HEK293 (cell line): ENCODE measurements at regions of chr9 and their contacts with region 1.

Region 1: GRCh38 chr9:35790385-35791296 is 750 bp upstream of the NPR2 start:
- H3K4me3 ChIP-seq: no peak overlapping the region
- H3K27ac ChIP-seq: no peak overlapping the region
- H3K4me1 ChIP-seq: no peaks in the 10 kb centered on the region
- CTCF ChIP-seq: peak; percentile 82

Region 2: DNA sequence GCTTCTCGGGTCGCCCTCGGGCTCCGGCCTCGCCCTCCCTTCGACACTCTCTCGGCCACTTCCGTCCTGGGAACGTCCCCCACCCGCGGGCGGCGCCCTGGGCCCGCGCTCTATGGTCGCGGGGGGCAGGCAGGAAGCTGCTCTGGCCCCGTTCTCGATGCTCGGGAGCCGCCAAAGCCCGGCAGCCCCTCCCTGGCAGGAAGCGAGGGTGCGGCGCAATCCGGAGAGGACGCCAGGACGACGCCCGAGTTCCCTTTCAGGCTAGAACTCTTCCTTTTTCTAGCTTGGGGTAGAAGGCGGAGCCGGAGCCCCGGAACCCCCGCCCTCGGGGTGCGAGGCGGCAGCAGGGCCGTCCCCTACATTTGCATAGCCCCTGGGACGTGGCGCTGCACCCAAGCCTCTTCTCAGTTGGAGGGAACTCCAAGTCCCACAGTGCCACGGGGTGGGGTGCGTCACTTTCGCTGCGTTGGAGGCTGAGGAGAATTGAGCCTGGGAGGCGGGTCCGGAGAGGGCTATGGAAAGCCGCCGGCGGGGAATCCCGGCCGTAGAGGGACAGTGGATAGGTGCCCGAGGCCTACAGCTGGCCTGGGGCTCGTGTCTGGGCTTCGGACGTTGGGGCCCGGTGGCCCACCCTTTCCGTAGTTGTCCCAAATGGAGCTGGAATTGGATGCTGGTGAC is 58.4 kb before region 1 on chr9 and contains the starts of genes CREB3 and TLN1:
- CTCF ChIA-PET with region 1: interaction called, 22 read pairs
- POLR2A ChIA-PET with region 1: interaction called, 7 read pairs
- H3K4me3 ChIP-seq: peak within 1 kb of the TSS; percentile 81
- H3K27ac ChIP-seq: peak within 1 kb of the TSS; percentile 81
- H3K4me1 ChIP-seq: peaks cover 13% of the 10 kb centered on the region
- CTCF ChIP-seq: peak; percentile 81

Region 3: DNA sequence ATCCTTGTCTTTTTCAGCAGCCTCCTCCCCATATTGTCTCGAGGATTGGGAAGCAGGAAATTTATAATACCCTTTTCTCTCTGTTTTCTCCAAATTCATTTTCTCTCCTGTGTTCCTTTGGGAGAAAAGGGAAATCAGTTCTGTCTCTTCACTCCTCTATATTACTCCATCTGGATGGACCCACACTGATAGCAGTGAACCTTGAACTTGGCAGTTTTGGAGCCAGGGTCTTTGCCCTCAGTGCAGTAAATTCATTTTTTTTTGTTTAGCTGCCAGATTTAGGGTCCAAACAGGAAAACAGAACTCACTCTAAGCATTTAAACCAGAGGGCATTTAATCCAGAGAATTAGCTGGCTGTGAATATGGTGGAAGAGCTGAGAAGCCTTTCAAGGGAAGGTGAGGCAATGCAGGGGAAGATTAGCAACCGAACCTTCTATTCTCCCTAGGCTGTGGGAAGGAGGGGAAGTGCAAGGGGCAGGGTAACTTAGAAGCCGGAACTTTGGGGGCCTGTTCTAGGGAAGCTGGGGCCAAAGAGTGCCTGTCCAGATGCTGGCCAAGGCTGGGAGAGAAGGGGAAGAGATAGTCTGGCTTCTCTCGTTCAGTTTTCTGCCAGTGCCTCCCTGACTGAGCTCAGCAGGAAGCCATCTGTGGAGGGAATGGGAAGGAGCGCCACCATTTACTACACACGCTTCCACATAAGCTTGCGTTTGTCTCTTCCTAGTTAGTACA is 15.6 kb before region 1 on chr9:
- CTCF ChIA-PET with region 1: interaction called, 65 read pairs
- POLR2A ChIA-PET with region 1: no interaction called
- H3K4me3 ChIP-seq: no peak overlapping the region
- H3K27ac ChIP-seq: no peak overlapping the region
- H3K4me1 ChIP-seq: peaks cover 18% of the 10 kb centered on the region
- CTCF ChIP-seq: no peak

Region 4: DNA sequence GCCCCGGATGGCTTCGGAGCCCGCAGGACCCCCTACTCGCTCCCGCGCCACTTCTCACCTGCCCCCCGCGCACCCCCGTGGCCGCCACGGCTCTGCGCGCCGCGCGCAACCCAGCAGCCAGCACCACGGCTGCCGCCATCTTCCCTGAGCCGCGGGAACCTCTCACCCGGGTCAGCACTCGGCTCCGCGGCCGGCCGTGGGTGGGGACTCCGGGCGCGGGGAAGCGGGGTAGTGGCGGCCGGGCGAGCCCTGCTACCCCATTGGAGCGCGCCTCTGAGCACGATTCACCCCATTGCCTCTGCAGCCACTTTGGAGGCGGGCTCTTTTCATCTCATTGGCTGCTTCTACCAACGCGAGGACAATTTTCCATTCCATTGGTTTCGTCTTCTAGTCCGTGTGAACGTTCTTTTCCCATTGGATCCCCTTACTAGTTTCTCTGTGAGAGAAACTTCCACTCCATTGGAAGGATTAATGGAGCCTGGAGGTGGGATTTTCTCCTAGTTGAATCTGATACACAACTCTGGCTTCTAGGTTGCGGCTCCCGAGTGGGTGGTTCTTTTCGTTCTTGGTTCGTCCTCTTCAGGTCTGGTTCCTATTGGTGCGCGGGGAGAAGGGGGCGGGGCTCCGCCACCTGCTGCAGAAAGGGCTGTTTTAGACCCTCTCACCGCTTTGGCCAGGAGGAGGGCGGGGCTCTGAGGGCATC is 24.4 kb after region 1 on chr9 and contains the start of gene HINT2:
- CTCF ChIA-PET with region 1: interaction called, 46 read pairs
- POLR2A ChIA-PET with region 1: interaction called, 11 read pairs
- H3K4me3 ChIP-seq: peak within 1 kb of the TSS; percentile 76
- H3K27ac ChIP-seq: peak within 1 kb of the TSS; percentile 78
- H3K4me1 ChIP-seq: no peaks in the 10 kb centered on the region
- CTCF ChIP-seq: no peak

Region 5: GRCh38 chr9:35835216-35835632 is 44.6 kb after region 1 on chr9:
- CTCF ChIA-PET with region 1: interaction called, 20 read pairs
- POLR2A ChIA-PET with region 1: no interaction called
- H3K4me3 ChIP-seq: no peak overlapping the region
- H3K27ac ChIP-seq: no peak overlapping the region
- H3K4me1 ChIP-seq: no peaks in the 10 kb centered on the region; the same call in 1 of the 2 replicates
- CTCF ChIP-seq: no peak

Region 6: GRCh38 chr9:35891646-35892045 is 101.0 kb after region 1 on chr9:
- CTCF ChIA-PET with region 1: interaction called, 24 read pairs
- POLR2A ChIA-PET with region 1: no interaction called
- H3K4me3 ChIP-seq: no peak overlapping the region
- H3K27ac ChIP-seq: no peak overlapping the region
- H3K4me1 ChIP-seq: no peaks in the 10 kb centered on the region
- CTCF ChIP-seq: no peak

Region 7: DNA sequence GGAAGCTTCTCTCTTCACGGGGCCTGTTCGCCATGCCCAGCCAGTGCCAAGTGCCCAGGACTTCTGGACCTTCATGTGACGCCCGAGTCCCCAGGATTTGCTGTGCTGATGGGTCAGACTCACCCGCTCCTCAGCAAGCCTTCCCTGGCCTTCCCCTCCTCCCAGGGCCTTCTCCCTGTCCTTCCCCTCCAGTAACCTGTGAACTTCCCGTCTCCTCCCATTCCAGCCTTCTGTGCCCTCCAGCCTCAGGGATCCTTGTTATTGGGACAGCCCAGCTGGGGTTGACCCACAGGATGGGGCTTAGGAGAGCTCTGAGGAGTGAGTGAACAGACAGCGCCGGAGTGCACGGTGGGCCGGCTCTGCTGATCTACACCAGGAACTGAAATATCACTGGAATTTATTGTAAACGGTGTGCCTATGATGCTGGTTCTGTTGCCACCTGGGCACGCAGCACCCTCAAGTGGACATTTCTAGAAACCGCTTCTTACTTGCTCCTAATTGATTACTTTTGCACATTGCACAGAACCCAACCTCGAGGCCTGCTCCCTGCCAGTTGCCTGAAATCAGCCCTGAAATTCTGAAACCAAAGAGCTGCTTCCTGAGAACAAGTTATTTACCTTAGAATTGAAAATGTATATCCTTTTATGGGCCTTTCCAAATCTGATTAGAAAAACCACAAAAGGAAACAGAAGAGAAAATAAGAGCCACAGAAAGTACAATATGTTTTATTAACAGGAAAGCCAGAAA is 120.1 kb after region 1 on chr9:
- CTCF ChIA-PET with region 1: interaction called, 35 read pairs
- POLR2A ChIA-PET with region 1: interaction called, 3 read pairs
- H3K4me3 ChIP-seq: no peak overlapping the region
- H3K27ac ChIP-seq: no peak overlapping the region
- H3K4me1 ChIP-seq: peaks cover 10% of the 10 kb centered on the region
- CTCF ChIP-seq: peak; percentile 49; the same call in 1 of the 2 replicates

Region 8: GRCh38 chr9:36074870-36075532 is 284.4 kb after region 1 on chr9:
- CTCF ChIA-PET with region 1: no interaction called
- POLR2A ChIA-PET with region 1: no interaction called
- H3K4me3 ChIP-seq: no peak overlapping the region
- H3K27ac ChIP-seq: no peak overlapping the region
- H3K4me1 ChIP-seq: peaks cover 2% of the 10 kb centered on the region; the same call in 1 of the 2 replicates
- CTCF ChIP-seq: no peak